SK-N-SH (cell line): ENCODE measurements at regions of chr1 and their contacts with region 1.

Region 1: DNA sequence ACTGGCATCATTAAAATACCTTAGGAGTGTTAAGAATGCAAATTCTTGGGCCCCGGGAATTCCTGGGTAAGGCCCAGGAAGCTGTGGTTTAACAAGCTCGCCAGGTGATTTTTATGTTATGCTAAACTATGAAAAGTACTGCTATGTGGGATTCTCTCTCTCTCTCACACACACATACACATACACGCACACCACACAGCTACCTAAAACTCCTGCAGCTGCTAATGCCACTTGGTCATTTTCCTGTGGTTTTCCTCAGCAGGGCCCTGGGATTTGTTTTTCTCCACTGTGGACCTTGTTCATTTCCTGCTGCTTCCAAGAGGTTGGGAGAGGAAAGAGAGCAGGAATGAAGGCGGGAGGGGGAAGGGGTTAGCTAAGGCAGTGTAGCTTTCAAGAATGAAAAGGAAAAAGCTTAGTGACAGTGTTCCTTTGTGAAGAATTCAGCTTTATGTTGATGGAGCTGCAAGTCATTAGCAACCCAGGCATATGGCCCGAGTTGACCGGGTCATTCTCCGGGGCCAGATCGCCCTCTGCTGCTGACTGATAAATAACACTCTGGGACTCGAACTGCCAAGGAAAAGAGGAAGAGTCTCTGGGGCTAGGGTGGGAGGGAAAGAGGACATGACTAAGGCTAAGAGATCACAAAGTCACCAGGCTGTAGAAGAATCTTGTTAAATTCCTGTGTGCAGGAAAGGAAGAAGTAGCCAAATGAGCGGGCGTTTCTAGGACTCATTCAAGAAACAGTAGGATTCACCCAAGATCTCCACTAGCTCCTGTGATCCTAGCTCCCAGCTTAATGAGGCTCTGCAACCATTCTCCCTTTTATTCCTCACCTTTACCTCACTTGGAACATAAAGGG is 30.5 kb upstream of the LRIG2 start:
- DNase-seq: peak; percentile 79
- H3K4me3 ChIP-seq: peak overlapping the region in 1 of 2 experiments; percentile 21; a peak in 1 of 4 replicates
- H3K27ac ChIP-seq: peak overlapping the region; percentile 48 to 70
- H3K4me1 ChIP-seq: peaks cover 7 to 18% of the 10 kb centered on the region in 2 experiments; a peak in 3 of 4 replicates
- H3K27me3 ChIP-seq: no peaks in the 10 kb centered on the region
- CTCF ChIP-seq: peak; percentile 70
- EP300 ChIP-seq: no peak
- RAD21 ChIP-seq: peak; percentile 96

Region 2: DNA sequence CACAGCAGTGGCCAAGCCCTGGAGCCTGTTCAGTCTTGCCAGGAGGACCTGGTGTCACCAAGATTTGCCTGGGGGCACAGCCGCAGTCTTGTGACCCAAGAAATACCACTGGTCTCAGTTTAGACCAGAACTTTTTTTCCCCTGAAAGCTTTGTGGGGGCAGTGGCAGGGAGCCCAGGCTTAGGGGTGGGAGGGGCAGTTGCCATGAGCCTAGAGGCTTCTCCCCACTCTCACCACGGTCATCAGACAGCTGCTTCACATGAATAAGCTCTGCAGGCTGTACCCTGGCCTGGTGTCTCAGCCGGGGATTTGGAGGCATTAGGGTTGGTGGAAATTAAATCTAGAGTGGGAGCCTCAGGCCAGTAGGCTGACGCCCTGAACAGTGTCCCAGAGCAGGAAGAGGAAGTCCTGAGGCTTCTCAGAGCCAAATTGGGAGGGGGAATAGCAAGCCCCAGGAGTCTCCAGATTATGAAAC is 160.2 kb before region 1 on chr1:
- CTCF ChIA-PET with region 1: interaction called, 120 read pairs
- POLR2A ChIA-PET with region 1: no interaction called
- DNase-seq: peak; percentile 23
- H3K4me3 ChIP-seq: no peak overlapping the region
- H3K27ac ChIP-seq: no peak overlapping the region
- H3K4me1 ChIP-seq: peaks cover 0 to 9% of the 10 kb centered on the region in 2 experiments; a peak in 1 of 4 replicates
- H3K27me3 ChIP-seq: no peaks in the 10 kb centered on the region
- CTCF ChIP-seq: no peak
- EP300 ChIP-seq: no peak
- RAD21 ChIP-seq: no peak

Region 3: GRCh38 chr1:112901387-112901786 is 141.1 kb before region 1 on chr1:
- CTCF ChIA-PET with region 1: interaction called, 12 read pairs
- POLR2A ChIA-PET with region 1: no interaction called
- DNase-seq: no peak
- H3K4me3 ChIP-seq: no peak overlapping the region
- H3K27ac ChIP-seq: no peak overlapping the region
- H3K4me1 ChIP-seq: peaks cover 4 to 5% of the 10 kb centered on the region in 2 experiments; a peak in 2 of 4 replicates
- H3K27me3 ChIP-seq: no peaks in the 10 kb centered on the region
- CTCF ChIP-seq: no peak
- EP300 ChIP-seq: no peak
- RAD21 ChIP-seq: no peak

Region 4: DNA sequence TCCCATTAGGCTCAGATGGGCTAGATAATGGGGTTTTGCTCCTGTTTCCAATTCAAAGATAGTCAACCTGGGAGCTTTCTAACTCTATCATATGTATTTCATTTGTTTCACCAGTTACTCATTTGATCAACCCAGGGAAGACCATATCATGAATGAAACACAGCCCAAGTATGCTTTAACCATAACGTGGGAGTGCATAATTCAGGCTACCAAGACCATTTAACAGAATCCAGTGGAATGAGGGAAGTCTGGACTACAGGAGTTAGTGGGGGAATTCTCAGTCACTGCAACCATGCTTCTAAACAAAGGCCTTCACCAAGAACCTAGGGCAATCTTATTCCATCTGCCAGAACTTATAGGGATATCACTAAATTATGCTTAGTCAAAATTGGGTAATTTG is 71.5 kb before region 1 on chr1:
- CTCF ChIA-PET with region 1: interaction called, 10 read pairs
- POLR2A ChIA-PET with region 1: no interaction called
- DNase-seq: no peak
- H3K4me3 ChIP-seq: no peak overlapping the region
- H3K27ac ChIP-seq: no peak overlapping the region
- H3K4me1 ChIP-seq: no peaks in the 10 kb centered on the region
- H3K27me3 ChIP-seq: no peaks in the 10 kb centered on the region
- CTCF ChIP-seq: no peak
- EP300 ChIP-seq: no peak
- RAD21 ChIP-seq: no peak

Region 5: DNA sequence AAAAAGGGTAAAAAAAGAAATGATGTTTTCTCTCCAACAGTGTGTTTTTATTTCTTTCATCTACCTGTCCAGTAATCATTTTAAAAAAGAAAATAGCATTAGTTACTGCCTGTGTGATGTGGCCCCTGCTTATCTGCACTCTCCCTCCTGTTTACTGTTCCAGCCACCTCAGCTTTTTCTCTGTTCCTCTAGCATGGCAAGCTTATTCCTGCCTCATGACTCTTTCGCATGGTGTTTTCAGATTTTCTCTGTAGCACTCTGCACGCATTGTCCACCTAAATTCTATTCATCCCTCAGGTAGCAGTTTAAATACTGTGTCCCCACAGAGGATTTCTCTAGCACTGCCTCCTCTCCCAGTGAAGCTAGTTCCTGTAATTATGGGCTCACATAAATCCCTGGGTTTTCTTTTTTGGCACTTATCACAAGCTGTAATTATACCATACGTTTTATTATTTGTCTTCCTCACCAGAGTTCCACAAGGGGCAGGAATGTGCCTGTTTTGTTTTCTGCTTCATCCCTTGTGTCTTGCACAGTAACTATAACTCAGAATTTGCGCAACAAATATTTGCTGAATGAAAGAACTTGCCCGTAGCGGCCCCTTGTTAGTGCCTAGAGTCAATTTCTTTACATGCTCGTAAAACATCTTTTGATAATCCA is 21.0 kb before region 1 on chr1:
- CTCF ChIA-PET with region 1: interaction called, 13 read pairs
- POLR2A ChIA-PET with region 1: no interaction called
- DNase-seq: no peak
- H3K4me3 ChIP-seq: no peak overlapping the region
- H3K27ac ChIP-seq: no peak overlapping the region
- H3K4me1 ChIP-seq: no peaks in the 10 kb centered on the region
- H3K27me3 ChIP-seq: no peaks in the 10 kb centered on the region
- CTCF ChIP-seq: no peak
- EP300 ChIP-seq: no peak
- RAD21 ChIP-seq: no peak

Region 6: GRCh38 chr1:113057006-113057405 is 14.5 kb after region 1 on chr1:
- CTCF ChIA-PET with region 1: interaction called, 29 read pairs
- POLR2A ChIA-PET with region 1: no interaction called
- DNase-seq: peak; percentile 47
- H3K4me3 ChIP-seq: no peak overlapping the region
- H3K27ac ChIP-seq: peak overlapping the region in 1 of 2 experiments; percentile 19; a peak in 1 of 4 replicates
- H3K4me1 ChIP-seq: peaks cover 0 to 22% of the 10 kb centered on the region in 2 experiments; a peak in 1 of 4 replicates
- H3K27me3 ChIP-seq: no peaks in the 10 kb centered on the region
- CTCF ChIP-seq: no peak
- EP300 ChIP-seq: no peak
- RAD21 ChIP-seq: no peak